ENCODE measurements at regions of chr17 and their contacts with region 1.

Region 1: GRCh38 chr17:15278924-15279477 is 13.9 kb upstream of the PMP22 start:
- DNase-seq: peak; percentile 82 to 96
- ATAC-seq: peak; percentile 94 to 97
- H3K4me3 ChIP-seq: no peak overlapping the region
- H3K27ac ChIP-seq: peak overlapping the region; percentile 56 to 85
- H3K4me1 ChIP-seq: peaks cover 35% of the 10 kb centered on the region
- CTCF ChIP-seq: no peak
- EP300 ChIP-seq: peak in 1 of 2 experiments; percentile 49; a peak in 2 of 5 replicates
- POLR2A ChIP-seq: no peak
- RAD21 ChIP-seq: peak; percentile 3 to 41; a peak in 3 of 5 replicates

Region 2: GRCh38 chr17:15289285-15290185 is 10.5 kb after region 1 on chr17:
- CTCF ChIA-PET with region 1: no interaction called
- POLR2A ChIA-PET with region 1: interaction called, 10 read pairs
- DNase-seq: peak; percentile 92 to 97
- ATAC-seq: peak; percentile 91 to 92
- H3K4me3 ChIP-seq: peak overlapping the region; percentile 33
- H3K27ac ChIP-seq: peak overlapping the region; percentile 79 to 85
- H3K4me1 ChIP-seq: peaks cover 21% of the 10 kb centered on the region
- CTCF ChIP-seq: no peak
- EP300 ChIP-seq: peak; percentile 74 to 79; a peak in 3 of 5 replicates
- POLR2A ChIP-seq: no peak
- RAD21 ChIP-seq: peak in 1 of 2 experiments; percentile 12; a peak in 2 of 5 replicates